Right ventricle myocardium inferior (tissue), 1 donor: ENCODE measurements at regions of chr3 and their contacts with region 1.

Region 1: DNA sequence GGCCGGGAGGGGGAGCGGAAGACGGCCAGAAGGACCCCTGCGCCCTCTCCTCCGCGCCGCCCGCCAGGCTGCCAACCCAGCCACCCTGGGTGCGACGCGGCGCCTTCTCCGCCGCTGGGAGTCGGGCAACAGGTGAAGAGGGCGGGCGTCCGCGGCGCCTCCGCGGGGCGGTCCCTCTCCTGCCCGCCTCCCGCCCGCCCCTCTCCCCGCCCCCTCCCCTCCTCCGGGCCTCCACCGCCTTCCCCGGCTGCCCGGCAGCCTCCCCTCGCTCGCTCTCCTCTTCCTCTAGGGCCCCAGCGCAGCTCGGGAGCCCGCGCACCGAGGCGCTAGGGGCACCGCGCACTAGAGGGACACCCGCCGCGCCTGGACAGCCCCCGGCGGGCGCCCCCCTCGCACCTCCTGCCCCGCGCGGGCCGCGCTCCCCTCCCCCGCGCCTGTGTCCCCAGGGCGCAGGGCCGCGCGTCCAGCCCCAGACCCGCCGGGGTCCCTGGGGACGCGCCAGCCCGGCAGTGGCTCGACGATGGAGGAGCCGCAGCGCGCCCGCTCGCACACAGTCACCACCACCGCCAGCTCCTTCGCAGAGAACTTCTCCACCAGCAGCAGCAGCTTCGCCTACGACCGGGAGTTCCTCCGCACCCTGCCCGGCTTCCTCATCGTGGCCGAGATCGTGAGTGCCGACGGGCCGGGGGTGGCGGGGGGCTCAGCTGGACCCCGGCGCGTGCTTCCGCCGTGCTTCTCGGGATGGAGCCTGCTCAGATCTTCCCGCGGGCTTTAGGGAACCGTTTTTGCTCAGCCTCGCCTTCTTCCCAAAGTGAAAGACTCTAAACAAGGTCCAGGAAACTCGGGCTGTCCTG is at the start of gene CMTM8:
- DNase-seq: peak; percentile 80
- ATAC-seq: peak; percentile 78
- total RNA-seq, gene CMTM8: 6.3 TPM

Region 2: DNA sequence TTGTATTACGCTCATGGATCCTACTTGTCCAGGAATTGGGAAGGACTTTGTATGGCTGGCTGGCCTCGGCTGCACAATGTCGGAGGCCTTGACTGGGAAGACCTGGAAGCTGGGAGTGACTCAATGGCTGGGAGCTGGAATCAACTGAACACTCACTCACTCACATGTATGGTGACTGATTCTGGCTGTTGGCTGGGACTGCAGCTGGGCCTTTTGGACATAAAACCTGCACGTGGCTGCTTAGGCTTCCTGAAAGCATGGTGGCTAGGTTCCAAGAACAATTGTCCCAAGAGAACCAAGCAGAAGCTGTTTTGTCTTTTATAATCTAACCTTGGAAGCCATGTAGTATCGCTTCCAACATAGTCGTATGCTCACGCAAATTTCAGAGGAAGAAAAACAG is 38.2 kb before region 1 on chr3:
- intact Hi-C with region 1: loop called (anchors 2 kb)
- DNase-seq: peak; percentile 79
- ATAC-seq: peak; percentile 91

Region 3: GRCh38 chr3:32283304-32283703 is 44.6 kb after region 1 on chr3:
- intact Hi-C with region 1: loop called (anchors 5 kb)
- DNase-seq: peak; percentile 74
- ATAC-seq: peak; percentile 48

Region 4: DNA sequence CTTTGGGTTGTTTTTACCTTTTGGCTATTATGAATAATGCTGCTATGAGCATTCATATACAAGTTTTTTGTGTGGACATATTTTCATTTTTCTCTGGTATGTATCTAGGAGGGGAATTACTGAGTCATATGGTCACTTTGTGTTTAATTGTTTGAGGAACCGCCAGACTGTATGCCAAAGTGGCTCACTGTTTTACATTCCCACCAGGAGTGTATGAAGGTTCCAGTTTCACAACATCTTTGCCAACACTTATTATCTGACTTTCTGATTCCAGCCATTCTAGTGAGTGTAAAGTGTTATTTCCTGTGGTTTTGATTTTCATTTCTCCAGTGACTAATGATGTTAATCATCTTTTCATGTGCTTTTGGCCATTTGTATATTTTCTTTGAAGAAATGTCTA is 204.8 kb after region 1 on chr3:
- intact Hi-C with region 1: no loop called
- DNase-seq: no peak
- ATAC-seq: no peak